MCF 10A (cell line): ENCODE measurements at regions of chr3 and their contacts with region 1.

Region 1: DNA sequence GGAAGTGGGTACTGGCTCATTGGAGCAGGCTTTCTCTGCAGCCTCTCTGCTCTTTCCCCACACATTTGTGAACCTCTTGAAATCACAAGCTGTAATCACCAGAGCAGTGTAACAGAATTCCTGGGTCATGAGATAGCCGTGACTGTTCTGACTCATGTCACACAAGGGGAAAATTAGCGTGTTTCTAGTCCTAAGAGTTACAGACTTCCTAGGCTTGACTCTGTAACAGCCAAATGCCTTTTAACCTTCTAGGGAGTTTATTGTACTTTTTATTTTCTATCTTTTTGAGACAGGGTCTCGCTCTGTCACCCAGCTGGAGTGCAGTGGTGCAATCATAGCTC is 54.7 kb upstream of the TRAK1 start:
- DNase-seq: peak; percentile 70
- H3K4me3 Mint-ChIP-seq: no peak overlapping the region
- H3K27ac Mint-ChIP-seq: peak overlapping the region; percentile 70
- H3K4me1 Mint-ChIP-seq: peaks cover 63% of the 10 kb centered on the region
- H3K27me3 Mint-ChIP-seq: no peaks in the 10 kb centered on the region
- CTCF ChIP-seq: no peak

Region 2: DNA sequence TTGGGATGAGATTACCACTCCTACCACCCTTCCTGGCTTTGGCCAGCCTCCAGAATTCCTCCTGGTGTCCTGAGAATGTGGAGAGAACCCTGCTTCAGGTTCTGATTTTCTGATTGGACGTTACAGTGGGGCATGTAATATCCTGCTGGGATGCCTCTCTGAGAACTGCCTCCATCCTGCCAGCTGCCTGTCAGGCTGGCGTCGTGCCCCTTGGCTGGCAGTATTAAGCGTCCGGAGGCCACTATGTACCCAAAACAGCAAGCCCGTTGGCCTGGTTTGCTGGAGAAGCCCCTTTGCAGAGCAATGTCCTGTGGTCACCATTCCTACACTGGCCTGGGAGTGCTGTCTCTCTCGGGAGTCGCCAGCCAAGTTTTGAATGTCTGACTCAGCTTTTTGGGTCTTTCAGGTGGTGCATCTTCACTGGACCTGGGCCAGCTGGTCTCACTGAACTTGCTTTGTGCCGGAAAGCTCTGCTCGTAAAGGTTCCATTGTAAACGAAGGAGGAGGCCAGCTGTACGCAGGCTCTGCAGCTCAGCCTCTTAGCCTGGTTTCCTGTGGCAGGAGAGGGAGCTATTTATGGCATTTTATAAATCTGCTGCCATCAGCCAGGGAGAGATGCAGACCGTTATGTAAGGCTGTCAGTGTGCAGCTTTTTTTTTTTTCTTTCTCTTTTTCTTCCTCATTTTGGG is 35.6 kb after region 1 on chr3:
- CTCF ChIA-PET with region 1: interaction called, 3 read pairs
- POLR2A ChIA-PET with region 1: interaction called, 11 read pairs
- intact Hi-C with region 1: no loop called
- DNase-seq: peak; percentile 94
- H3K4me3 Mint-ChIP-seq: peak overlapping the region; percentile 50
- H3K27ac Mint-ChIP-seq: peak overlapping the region; percentile 43
- H3K4me1 Mint-ChIP-seq: peaks cover 34% of the 10 kb centered on the region
- H3K27me3 Mint-ChIP-seq: no peaks in the 10 kb centered on the region
- CTCF ChIP-seq: no peak